Activated CD4-positive, alpha-beta T cell treated with anti-CD3 and anti-CD28 coated beads for 36 hours (primary cell): ENCODE measurements at regions of chr4 and their contacts with region 1.

Region 1: DNA sequence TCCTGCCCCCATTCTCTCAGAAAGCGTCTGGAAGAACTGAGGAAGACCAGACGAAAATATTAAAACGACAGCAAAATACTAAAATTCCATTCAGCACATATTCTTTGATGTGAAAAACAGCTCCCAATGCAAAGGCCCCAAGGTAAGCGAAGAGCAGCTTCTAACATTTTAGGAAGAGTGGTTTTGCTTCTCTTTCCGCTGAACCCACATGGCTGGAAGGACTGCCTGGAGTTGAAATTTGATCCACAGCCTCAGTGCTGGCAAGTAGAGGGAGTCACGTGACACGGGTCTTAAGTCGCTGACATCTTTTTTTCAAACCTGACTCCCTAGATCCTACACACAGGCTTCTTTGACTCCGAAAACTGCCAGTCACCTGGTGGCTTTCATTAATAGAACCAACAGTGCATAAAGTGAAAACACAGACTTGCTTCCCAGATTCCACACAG is at the start of gene FAM13A:
- DNase-seq: peak; percentile 15
- ATAC-seq: no peak
- H3K4me3 Mint-ChIP-seq: no peak within 1 kb of the TSS
- H3K27ac Mint-ChIP-seq: peak within 1 kb of the TSS; percentile 17
- H3K4me1 Mint-ChIP-seq: peaks cover 36% of the 10 kb centered on the region
- H3K27me3 Mint-ChIP-seq: peaks cover 8% of the 10 kb centered on the region
- total RNA-seq, gene FAM13A: 5.0 to 5.1 TPM

Region 2: GRCh38 chr4:88843067-88843685 is 213.8 kb before region 1 on chr4:
- CTCF ChIA-PET with region 1: no interaction called
- POLR2A ChIA-PET with region 1: no interaction called
- intact Hi-C with region 1: no loop called
- DNase-seq: no peak
- ATAC-seq: no peak
- H3K4me3 Mint-ChIP-seq: no peak overlapping the region
- H3K27ac Mint-ChIP-seq: no peak overlapping the region
- H3K4me1 Mint-ChIP-seq: no peaks in the 10 kb centered on the region
- H3K27me3 Mint-ChIP-seq: no peaks in the 10 kb centered on the region

Region 3: GRCh38 chr4:88900432-88900831 is 156.5 kb before region 1 on chr4:
- CTCF ChIA-PET with region 1: no interaction called
- POLR2A ChIA-PET with region 1: no interaction called
- intact Hi-C with region 1: no loop called
- DNase-seq: no peak
- ATAC-seq: no peak
- H3K4me3 Mint-ChIP-seq: no peak overlapping the region
- H3K27ac Mint-ChIP-seq: no peak overlapping the region
- H3K4me1 Mint-ChIP-seq: no peaks in the 10 kb centered on the region
- H3K27me3 Mint-ChIP-seq: peaks cover 4% of the 10 kb centered on the region

Region 4: DNA sequence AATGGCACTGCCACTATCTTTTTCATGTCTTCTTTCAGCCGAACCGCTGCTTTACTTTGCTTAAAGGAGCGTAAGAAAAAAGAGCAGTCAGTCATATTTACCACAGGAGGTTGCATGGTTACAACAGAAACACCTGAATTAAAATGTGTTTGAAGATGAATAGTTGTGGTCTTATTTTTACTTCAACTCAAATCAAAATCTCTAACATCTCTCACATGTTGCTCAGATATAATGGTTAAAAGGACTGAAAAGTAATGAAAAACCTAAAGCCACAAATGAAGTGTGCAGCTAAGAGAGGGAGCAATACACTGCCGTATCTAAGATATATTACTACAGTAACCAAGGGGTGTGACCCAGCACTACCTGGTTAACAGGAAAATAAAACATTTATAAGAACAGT is 27.4 kb before region 1 on chr4:
- CTCF ChIA-PET with region 1: interaction called, 4 read pairs
- POLR2A ChIA-PET with region 1: no interaction called
- intact Hi-C with region 1: loop called in 1 of 2 experiments (anchors 2 kb)
- DNase-seq: no peak
- ATAC-seq: peak; percentile 69
- H3K4me3 Mint-ChIP-seq: no peak overlapping the region
- H3K27ac Mint-ChIP-seq: no peak overlapping the region
- H3K4me1 Mint-ChIP-seq: peaks cover 10% of the 10 kb centered on the region
- H3K27me3 Mint-ChIP-seq: peaks cover 2% of the 10 kb centered on the region

Region 5: DNA sequence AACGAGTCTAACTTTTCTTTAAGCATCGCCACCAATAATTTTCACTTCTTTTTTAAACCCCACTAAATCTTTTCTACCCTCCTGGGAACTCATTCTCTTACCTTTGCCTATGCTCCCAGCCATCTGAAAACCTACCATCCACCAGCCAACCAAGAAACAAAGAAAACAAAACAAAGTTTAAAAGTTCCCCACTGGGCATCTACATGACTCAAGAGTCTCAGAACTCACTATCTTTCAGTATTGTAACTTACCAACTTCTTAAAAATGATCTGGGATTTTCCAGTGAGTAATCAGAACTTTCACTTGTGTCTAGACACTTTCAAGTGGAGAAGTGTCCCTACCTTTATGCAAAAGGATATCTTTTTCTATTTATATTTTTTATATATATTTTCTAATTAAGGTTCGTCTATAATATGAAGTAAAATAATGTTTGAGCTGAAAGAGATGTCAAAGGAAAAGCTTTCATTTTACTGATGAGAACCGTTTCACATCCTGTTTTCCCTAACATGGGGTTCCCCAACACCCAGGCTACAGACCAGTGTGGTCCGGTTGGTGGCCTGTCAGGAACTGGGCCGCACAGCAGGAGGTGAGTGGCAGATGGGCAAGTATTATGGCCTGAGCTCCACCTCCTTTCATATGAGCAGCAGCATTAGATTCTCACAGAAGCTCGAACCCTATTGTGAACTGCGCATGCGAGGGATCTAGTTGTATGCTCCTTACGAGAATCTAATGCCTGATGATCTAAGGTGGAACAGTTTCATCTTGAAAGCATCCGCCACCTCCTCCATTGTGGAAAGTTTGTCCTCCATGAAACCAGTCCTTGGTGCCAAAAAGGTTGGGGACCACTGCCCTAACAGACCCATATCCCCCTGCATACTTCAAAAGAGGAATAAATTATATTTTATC is 44.5 kb after region 1 on chr4:
- CTCF ChIA-PET with region 1: no interaction called
- POLR2A ChIA-PET with region 1: no interaction called
- intact Hi-C with region 1: loop called in 1 of 2 experiments (anchors 1 kb)
- DNase-seq: peak; percentile 16
- ATAC-seq: peak; percentile 90
- H3K4me3 Mint-ChIP-seq: no peak overlapping the region
- H3K27ac Mint-ChIP-seq: peak overlapping the region; percentile 44
- H3K4me1 Mint-ChIP-seq: peaks cover 21% of the 10 kb centered on the region
- H3K27me3 Mint-ChIP-seq: peaks cover 2% of the 10 kb centered on the region

Region 6: DNA sequence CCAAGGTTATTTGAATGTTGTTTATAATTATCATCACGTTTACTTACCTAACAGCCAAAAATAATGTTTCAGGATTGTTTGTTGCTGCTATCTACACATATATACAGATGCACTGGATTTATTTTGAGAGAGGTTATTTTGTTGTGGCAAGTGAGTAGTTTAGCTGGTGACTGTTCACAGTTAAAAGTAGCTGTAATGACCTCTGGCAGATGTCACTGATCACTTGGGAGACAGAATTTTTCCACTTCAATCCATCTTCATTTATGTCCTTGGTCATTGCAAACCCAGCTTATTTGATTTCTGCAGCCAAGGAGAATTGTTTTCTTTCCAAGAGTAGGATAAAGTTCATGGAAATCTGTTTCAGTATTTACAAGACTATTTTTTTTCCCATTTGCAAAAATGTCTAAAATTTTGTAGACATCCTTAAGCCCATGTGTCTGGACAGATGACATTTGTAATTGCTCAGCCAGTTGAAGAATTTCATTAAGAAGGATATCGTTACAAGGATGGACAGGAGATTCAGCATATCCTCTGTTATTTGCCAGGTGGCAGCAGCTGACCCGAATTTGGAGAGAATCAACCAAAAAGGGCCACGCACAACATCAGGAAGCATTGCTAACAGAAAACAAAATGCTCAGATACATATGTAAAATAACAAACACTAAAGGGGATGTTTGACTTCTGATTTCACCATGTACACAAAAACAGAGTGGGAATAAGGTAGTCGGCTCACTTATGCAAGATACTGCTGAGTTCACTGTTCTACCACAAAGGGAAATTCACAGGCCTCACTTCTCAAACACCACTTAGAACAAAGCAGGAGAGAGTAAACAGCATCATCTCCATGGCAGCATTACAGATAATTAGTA is 186.1 kb after region 1 on chr4:
- CTCF ChIA-PET with region 1: no interaction called
- POLR2A ChIA-PET with region 1: no interaction called
- intact Hi-C with region 1: no loop called
- DNase-seq: no peak
- ATAC-seq: peak; percentile 86
- H3K4me3 Mint-ChIP-seq: no peak overlapping the region
- H3K27ac Mint-ChIP-seq: peak overlapping the region; percentile 79
- H3K4me1 Mint-ChIP-seq: peaks cover 44% of the 10 kb centered on the region
- H3K27me3 Mint-ChIP-seq: no peaks in the 10 kb centered on the region